Tibial artery (tissue), 4 donors: ENCODE measurements at regions of chr12 and their contacts with region 1.

Region 1: DNA sequence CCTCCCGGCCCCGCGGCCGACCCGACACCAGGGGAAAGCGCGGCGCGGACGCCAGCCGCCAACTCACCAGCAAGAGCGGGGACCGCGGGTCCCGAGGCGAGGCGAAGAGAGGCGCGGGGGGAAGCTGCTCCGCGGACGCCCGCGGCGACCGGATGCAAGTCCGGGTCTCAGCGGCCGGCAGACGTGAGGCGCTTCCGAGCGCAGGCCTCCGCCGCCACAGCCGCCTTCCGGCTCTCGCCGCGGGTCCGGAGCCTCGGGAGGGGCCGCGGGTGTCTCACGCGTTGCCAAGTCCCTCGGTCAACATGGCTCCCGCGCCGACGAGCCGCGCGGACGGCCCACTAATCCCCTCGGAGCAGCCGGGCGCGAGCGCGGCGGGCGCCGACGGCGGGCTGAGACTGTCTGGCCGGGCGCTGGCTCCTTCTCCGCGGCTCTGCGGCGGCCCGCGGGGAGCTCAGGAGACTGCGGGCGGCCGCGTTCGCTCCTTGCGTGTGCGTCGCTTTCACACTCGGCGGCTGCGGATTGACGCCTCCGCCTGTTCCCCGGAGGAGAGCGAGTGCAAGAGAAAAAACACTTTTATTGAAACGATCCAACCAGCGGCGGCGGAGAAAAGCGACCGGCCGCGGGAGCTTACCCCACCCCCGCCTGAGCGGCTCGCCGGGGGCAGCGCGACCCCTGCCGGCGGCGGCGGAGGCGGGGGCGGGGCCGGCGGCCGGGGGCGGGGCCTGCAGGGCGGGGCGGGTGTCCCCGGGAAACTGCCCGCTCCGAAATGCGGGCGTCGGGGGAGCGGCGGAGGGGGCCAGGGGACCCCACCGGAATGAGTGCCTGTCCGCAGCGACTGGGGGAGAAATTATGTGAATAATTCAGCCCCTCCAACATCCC is at the start of gene CDK17:
- DNase-seq: peak; percentile 77 to 91
- H3K4me3 ChIP-seq: peak within 1 kb of the TSS; percentile 88 to 93
- H3K27ac ChIP-seq: peak within 1 kb of the TSS; percentile 99 to 100
- H3K4me1 ChIP-seq: peaks cover 0 to 24% (median 10%) of the 10 kb centered on the region in 4 donors
- H3K27me3 ChIP-seq: no peaks in the 10 kb centered on the region
- CTCF ChIP-seq: peak in 1 of 2 experiments; percentile 40

Region 2: GRCh38 chr12:96035278-96036236 is 364.6 kb before region 1 on chr12 and contains the start of gene LTA4H:
- intact Hi-C with region 1: loop called (anchors 10 kb)
- DNase-seq: peak; percentile 98
- H3K4me3 ChIP-seq: peak within 1 kb of the TSS; percentile 88 to 94
- H3K27ac ChIP-seq: peak within 1 kb of the TSS; percentile 91 to 95
- H3K4me1 ChIP-seq: peaks cover 0 to 16% (median 10%) of the 10 kb centered on the region in 4 donors
- H3K27me3 ChIP-seq: no peaks in the 10 kb centered on the region
- CTCF ChIP-seq: no peak

Region 3: DNA sequence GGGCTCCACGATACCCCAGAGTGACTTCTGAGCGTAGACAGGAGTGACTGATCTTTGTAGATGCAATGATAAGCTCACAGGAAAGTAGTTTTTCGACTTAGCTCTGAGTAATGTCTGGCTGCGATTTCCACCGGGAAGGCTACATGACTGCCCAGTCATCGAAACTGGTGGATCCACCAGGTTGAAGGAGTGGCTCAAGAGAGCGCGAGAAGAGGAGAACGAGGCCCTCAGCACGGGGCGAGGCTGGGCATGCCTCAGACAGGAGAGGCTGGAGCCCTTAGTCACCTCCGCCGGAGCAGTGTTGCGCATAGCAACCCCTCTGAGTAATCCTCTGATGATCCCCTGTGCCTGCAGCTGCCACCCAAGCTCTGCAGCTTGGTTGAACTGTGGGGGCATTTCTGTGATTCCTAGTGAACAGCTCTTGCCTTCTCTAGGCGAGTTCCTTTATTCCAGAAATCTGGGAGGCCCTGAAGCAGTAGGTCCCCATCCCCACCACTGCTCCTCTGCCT is 180.4 kb before region 1 on chr12:
- intact Hi-C with region 1: no loop called
- DNase-seq: no peak
- H3K4me3 ChIP-seq: no peak overlapping the region
- H3K27ac ChIP-seq: no peak overlapping the region
- H3K4me1 ChIP-seq: peaks cover 0 to 12% (median 6%) of the 10 kb centered on the region in 4 donors
- H3K27me3 ChIP-seq: no peaks in the 10 kb centered on the region
- CTCF ChIP-seq: no peak

Region 4: DNA sequence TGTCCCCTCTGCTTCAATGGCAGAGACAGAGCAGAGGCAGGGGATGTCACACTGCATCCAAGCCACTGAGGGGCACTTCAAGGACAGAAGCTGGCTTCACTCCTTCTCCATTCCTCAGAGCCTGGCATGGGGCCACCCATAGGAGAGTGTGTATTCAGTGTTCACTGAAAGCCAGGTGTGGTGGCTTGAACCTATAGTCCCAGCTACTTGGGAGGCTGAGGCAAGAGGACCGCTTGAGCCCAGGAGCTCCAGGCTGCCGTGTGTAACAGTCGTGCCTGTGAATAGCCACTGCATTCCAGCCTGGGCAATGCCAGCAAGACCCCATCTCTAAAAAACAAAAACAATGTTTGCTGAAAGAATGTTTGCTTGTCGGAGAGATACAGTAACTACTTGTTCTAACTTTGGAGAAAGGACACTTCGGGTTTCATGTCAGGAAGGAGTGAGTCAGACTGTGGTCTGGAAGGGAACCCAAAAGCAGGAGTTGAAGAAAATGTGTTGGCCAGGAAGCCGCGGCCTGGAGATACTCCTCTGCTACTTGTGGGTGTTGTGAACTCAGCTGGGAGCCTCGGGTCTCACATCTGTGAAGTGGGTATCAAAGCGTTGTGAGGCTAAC is 162.6 kb before region 1 on chr12:
- intact Hi-C with region 1: loop called (anchors 10 kb)
- DNase-seq: peak; percentile 87 to 88
- H3K4me3 ChIP-seq: no peak overlapping the region
- H3K27ac ChIP-seq: peak overlapping the region; percentile 52 to 65
- H3K4me1 ChIP-seq: peaks cover 0 to 66% (median 45%) of the 10 kb centered on the region in 4 donors
- H3K27me3 ChIP-seq: peaks cover 0 to 9% of the 10 kb centered on the region in 2 donors
- CTCF ChIP-seq: no peak

Region 5: GRCh38 chr12:96635834-96636233 is 235.7 kb after region 1 on chr12:
- intact Hi-C with region 1: no loop called
- DNase-seq: no peak
- H3K4me3 ChIP-seq: no peak overlapping the region
- H3K27ac ChIP-seq: no peak overlapping the region
- H3K4me1 ChIP-seq: no peaks in the 10 kb centered on the region
- H3K27me3 ChIP-seq: no peaks in the 10 kb centered on the region
- CTCF ChIP-seq: no peak

Region 6: DNA sequence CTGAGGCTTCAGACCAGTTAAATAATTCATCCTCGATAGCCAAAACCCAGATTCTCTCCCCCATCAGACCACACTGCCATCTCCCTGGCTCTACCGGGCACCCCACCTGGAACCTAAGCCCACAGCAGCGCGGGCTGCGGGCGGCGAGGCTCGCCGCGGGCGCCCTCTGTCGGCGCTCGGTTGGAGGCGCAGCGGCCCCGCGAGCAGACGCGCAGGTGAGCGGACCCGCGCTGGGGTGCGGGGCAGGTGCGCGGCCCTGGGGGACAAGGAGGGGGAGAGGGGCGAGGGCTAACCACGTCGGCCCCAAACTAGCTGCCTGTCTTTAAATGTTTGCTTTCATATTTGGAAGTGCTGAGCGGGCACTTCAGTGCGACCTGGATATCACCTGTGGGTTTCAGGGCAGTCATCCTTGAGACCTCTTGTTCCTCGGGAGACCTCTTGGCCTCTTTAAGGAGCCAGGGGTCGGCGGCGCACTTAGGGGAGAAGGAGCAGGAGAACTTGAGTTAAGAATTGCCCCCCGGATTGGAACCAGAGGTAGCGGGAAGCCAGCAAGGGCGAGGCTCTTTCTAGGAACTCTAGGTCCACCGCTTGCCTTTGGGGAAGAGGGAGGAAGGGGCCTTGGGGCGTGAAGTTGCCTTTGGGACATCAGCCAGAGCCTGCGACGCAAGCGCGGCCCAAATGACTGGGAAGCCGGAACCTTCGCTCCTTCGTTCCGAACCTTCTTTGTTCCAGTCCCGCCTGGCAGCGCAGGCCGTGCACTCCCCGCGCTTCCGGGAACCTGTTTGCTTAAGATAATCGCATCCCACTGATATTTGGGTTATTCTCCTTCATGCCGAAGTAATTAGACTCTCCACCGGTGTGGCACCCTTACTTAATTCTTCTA is 585.6 kb after region 1 on chr12:
- intact Hi-C with region 1: no loop called
- DNase-seq: no peak
- H3K4me3 ChIP-seq: peak overlapping the region; percentile 39 to 51
- H3K27ac ChIP-seq: no peak overlapping the region
- H3K4me1 ChIP-seq: peaks cover 0 to 17% (median 9%) of the 10 kb centered on the region in 4 donors
- H3K27me3 ChIP-seq: peaks cover 0 to 15% of the 10 kb centered on the region in 2 donors
- CTCF ChIP-seq: peak; percentile 54 to 65